ENCODE measurements at regions of chr1 and their contacts with region 1.

Region 1: GRCh38 chr1:157073944-157074767 is 25.5 kb downstream of the ETV3L start:
- DNase-seq: peak; percentile 64
- H3K4me3 Mint-ChIP-seq: peak overlapping the region; percentile 42
- H3K27ac Mint-ChIP-seq: no peak overlapping the region
- H3K4me1 Mint-ChIP-seq: no peaks in the 10 kb centered on the region
- H3K27me3 Mint-ChIP-seq: peaks cover 37% of the 10 kb centered on the region
- CTCF ChIP-seq: peak; percentile 56

Region 2: DNA sequence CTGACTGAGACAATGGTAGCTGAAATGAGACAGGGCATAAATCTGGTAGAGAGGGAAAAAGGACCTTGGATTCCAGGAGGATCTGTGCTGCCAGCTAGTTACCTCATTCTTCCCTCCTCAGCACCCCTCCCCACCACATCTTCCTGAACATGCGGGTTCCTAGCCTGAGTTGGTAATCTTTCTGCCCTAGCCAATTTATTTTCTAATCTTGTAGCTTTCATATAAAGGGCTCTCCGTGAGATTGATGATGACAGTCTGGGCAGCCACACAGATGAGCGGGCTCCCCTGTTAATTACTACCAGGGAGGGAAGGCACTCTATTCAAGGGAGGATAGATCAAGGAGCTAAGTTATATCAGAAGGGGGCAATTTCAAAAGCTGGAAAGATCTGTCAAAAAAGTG is 48.8 kb before region 1 on chr1:
- CTCF ChIA-PET with region 1: interaction called, 10 read pairs
- intact Hi-C with region 1: no loop called
- DNase-seq: no peak
- H3K4me3 Mint-ChIP-seq: no peak overlapping the region
- H3K27ac Mint-ChIP-seq: no peak overlapping the region
- H3K4me1 Mint-ChIP-seq: no peaks in the 10 kb centered on the region
- H3K27me3 Mint-ChIP-seq: no peaks in the 10 kb centered on the region
- CTCF ChIP-seq: no peak

Measured in Calu3 (cell line).